WTC11 (cell line): ENCODE measurements at regions of chr11 and their contacts with region 1.

Region 1: DNA sequence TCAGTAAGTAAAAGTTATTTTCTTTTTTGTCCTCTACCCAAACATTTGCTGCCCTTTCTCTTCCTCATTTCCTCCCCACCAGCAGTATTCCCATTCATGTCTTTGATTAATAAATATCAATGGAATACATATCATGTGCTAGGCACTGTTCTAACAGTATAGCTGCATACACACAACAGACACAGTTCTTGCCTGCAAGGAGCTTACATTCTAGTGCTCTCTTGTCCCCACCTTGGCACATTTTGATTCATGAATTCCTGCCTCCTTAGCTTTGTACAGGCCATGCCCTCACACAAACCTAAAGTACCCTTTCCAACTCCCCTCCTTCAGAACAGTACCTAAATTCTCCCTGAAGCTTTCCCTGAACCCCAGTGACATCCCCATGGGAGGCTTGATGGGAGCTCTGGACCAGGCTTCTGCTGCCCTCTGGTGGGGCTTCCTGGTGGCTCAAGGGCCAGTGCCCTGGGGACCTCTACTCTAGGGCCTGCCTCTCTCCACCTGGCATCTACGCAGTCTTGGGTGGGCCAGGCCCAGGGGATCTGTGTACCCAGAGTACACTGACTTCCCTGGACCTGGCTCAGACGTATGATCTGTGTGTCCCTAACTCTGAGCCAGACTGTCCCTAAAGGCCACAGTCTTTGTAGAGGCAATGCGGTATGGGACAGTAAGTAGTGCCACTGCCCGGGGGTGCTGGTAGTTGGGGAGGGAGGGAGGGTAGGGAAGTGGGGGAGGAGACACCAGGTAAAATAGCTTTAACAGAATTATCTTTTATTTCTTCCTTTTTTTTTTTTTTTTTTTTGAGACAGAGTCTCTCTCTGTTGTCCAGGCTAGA is 14.1 kb downstream of the RPS13 start:
- DNase-seq: peak; percentile 88
- ATAC-seq: peak; percentile 99
- H3K4me3 Mint-ChIP-seq: no peak overlapping the region
- H3K27ac Mint-ChIP-seq: no peak overlapping the region
- H3K4me1 Mint-ChIP-seq: no peaks in the 10 kb centered on the region
- H3K27me3 Mint-ChIP-seq: no peaks in the 10 kb centered on the region
- CTCF ChIP-seq: peak; percentile 64

Region 2: DNA sequence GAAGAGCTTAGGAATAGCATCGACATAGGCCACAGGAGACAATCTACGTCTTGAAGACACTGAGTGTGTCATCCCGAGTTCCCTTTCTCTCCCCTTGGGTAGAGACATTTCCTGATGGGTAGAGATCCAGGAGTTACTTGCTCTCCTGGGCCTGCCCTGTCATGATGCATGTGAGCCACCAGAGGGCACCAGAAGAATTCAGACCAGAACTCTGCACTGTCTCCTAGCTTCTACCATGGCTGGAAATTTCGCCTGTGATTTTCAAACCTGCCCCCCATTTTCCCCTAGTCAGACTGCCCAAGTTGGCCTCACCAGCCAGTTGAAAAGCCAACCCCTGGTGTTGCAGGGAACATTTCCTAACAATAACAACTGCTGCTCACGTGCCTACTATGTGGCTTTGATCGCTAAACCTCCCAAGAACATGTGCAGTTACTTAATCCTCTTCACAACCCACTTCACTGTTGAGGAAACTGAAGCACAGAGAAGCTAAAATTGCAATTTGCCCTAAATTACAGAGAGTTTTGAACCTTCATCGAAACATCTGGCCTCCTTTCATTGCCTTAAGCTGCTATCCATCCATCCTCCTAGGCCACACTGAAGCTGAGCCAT is 277.8 kb before region 1 on chr11:
- CTCF ChIA-PET with region 1: interaction called, 32 read pairs
- POLR2A ChIA-PET with region 1: no interaction called
- DNase-seq: peak; percentile 79
- ATAC-seq: peak; percentile 85
- H3K4me3 Mint-ChIP-seq: no peak overlapping the region
- H3K27ac Mint-ChIP-seq: no peak overlapping the region
- H3K4me1 Mint-ChIP-seq: peaks cover 4% of the 10 kb centered on the region
- H3K27me3 Mint-ChIP-seq: no peaks in the 10 kb centered on the region
- CTCF ChIP-seq: peak; percentile 75

Region 3: DNA sequence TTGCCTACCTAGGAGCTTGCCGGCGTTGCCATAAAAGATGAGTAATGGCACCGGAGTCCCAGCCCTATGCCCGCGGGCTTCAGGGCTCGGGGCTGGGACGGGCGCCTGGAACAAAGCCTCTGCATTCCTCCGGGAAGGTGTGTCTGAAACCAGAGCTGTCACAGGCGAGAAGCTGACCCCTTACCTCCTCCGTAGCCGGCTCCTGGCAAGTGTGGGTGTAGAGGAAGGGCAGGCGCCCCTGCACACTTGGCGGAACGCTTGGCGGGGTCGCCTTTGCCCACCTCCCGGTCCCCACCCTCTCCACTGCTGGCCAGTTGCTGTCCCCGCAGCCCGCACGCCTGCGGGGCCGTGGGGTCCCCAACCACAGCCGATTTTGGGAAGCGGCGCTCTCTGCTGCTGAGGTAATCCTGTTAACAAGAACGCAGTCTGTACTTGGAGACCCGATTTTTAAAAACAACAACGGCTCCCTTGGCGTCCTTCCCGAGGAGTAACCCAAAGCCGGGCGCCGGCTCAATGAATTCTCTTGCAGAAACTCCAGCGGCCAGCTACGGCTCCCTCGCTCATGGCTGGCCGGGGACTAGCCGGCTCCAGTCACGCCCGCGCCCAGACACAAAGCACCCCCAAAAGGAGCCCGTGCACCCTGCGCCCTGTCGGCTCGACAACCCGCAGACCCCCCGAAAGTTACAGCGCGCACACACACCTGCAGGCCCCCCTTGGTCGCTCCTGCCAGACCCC is 138.4 kb before region 1 on chr11:
- CTCF ChIA-PET with region 1: interaction called, 12 read pairs
- POLR2A ChIA-PET with region 1: no interaction called
- DNase-seq: peak; percentile 68
- ATAC-seq: peak; percentile 76
- H3K4me3 Mint-ChIP-seq: peak overlapping the region; percentile 85
- H3K27ac Mint-ChIP-seq: no peak overlapping the region
- H3K4me1 Mint-ChIP-seq: peaks cover 33% of the 10 kb centered on the region
- H3K27me3 Mint-ChIP-seq: peaks cover 55% of the 10 kb centered on the region
- CTCF ChIP-seq: no peak

Region 4: DNA sequence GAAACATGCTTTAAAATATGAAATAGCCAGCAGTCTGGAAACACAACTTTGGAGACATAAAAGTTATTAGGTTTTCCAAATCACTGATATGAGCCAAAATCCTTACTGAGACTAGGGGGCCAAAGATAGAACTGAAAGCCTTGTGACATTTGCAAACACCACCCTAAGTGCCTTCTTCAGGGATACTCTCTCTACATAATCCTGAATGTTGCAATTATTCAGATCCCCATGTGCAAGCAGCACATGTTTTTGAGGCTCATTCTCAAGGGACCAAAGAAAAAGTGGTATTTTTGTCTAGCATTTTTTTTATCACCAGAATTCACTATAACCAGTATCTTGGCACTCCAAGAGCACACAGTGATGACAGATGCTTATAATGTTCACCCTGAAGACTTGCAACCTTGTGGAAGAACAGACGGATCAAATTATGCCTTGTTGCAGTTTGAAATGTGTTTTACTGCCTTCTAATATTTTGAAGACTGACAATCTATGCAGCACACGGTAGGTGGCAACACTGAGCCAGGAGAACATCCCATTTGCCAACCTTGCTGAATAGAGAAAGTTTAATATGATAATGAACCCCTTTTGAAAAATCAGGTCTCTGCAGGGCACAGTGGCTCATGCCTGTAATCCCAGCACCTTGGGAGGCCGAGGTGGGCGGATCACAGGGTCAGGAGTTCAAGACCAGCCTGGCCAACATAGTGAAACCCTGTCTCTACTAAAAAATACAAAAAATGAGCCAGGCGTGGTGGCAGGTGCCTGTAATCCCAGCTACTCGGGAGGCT is 127.7 kb before region 1 on chr11:
- CTCF ChIA-PET with region 1: interaction called, 10 read pairs
- POLR2A ChIA-PET with region 1: no interaction called
- DNase-seq: peak; percentile 45
- ATAC-seq: peak; percentile 91
- H3K4me3 Mint-ChIP-seq: no peak overlapping the region
- H3K27ac Mint-ChIP-seq: no peak overlapping the region; the same call in 1 of the 2 replicates
- H3K4me1 Mint-ChIP-seq: peaks cover 14% of the 10 kb centered on the region
- H3K27me3 Mint-ChIP-seq: no peaks in the 10 kb centered on the region; the same call in 1 of the 2 replicates
- CTCF ChIP-seq: peak; percentile 48; the same call in 1 of the 2 replicates

Region 5: GRCh38 chr11:16945671-16946469 is 117.5 kb before region 1 on chr11:
- CTCF ChIA-PET with region 1: interaction called, 36 read pairs
- POLR2A ChIA-PET with region 1: no interaction called
- DNase-seq: peak; percentile 45
- ATAC-seq: peak; percentile 76
- H3K4me3 Mint-ChIP-seq: no peak overlapping the region
- H3K27ac Mint-ChIP-seq: 0 out of 2 replicates have a peak overlapping the region, but pooled peaks have one; percentile 24
- H3K4me1 Mint-ChIP-seq: peaks cover 22% of the 10 kb centered on the region
- H3K27me3 Mint-ChIP-seq: no peaks in the 10 kb centered on the region
- CTCF ChIP-seq: no peak

Region 6: DNA sequence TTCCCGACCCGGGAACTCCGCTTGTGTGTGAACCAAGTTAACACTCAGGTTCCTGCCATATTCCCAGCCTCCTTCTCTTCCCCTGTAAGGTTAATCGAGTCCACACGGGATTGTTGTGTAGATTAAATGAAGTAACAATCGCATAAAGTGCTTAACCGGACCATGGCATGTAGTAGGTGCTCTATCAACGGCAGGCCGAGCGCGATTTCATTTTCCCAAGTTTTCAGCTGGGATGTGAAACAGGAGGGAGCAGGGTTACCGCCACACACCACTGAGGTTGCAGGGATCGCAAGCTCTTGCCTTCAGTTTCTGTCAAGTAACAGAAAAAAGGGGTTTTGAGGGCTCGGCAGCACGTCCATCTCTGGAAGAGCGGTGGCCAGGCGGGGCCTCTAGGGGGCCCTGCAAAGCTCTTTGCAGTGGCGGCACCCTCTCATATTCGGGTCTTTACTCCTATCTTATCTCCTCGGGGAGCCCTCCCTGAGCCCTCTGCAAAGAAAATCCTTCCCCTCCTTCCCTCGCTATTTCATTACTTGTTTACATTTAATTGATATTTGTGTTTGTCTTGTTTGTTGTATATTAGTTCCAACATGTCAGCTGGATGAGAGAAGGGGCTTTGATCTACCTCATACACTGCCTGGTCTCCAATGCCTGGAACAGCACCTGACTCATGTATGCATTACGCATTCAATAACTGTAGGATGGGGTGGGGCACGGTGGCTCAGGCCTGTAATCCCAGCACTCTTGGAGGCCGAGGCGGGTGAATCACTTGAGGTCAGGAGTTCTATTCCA is 48.4 kb before region 1 on chr11:
- CTCF ChIA-PET with region 1: interaction called, 18 read pairs
- POLR2A ChIA-PET with region 1: no interaction called
- DNase-seq: peak; percentile 59
- ATAC-seq: peak; percentile 58
- H3K4me3 Mint-ChIP-seq: peak overlapping the region; percentile 86
- H3K27ac Mint-ChIP-seq: peak overlapping the region; percentile 31; the same call in 1 of the 2 replicates
- H3K4me1 Mint-ChIP-seq: peaks cover 10% of the 10 kb centered on the region
- H3K27me3 Mint-ChIP-seq: peaks cover 14% of the 10 kb centered on the region; the same call in 1 of the 2 replicates
- CTCF ChIP-seq: peak; percentile 34; the same call in 1 of the 2 replicates

Region 7: DNA sequence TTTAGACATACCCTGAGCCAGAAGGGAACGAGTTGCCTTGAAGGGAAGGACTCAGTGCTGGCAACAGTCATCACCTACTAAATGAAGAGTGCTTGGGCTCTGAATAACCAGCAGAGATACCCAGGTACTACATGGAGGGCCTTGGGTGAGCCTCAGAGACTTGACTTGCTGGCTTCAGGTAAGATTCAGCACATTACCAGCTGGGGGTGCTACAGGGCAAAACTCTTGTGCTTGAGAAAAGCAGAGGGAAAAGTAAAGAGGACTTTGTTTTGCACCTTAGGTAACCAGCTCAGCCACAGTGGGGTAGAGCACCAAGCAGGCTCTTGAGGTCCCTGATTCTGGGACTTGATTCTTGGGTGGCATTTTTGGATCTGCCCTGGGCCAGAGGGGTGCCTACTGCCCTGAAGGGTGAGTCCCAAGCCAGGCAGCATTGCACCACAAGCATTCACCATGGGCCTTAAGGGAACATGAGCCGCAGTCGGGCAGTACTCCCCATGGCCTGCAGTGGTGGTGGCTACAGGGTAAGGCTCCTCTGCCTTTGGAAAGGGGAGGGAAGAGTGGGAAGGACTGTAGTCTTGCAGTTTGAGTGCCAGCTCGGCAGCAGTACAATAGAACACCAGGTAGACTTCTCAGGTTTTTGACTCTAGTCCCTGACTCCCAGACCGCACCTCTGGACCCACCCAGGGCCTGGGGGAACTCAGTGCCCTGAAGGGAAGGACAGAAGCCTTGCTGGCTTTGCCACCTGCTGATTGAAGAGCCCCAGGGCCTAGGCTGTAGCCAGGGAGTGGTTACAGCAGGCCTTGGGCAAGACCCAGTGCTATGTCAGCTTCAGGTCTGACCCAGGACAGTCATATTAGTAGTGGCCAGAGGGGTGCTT is 26.5 kb before region 1 on chr11:
- CTCF ChIA-PET with region 1: interaction called, 17 read pairs
- POLR2A ChIA-PET with region 1: no interaction called
- DNase-seq: peak; percentile 67
- ATAC-seq: peak; percentile 96
- H3K4me3 Mint-ChIP-seq: no peak overlapping the region
- H3K27ac Mint-ChIP-seq: no peak overlapping the region
- H3K4me1 Mint-ChIP-seq: no peaks in the 10 kb centered on the region; the same call in 1 of the 2 replicates
- H3K27me3 Mint-ChIP-seq: peaks cover 9% of the 10 kb centered on the region
- CTCF ChIP-seq: peak; percentile 26; the same call in 1 of the 2 replicates

Region 8: GRCh38 chr11:17230867-17231851 is 167.8 kb after region 1 on chr11:
- CTCF ChIA-PET with region 1: no interaction called
- POLR2A ChIA-PET with region 1: no interaction called
- DNase-seq: no peak
- ATAC-seq: no peak
- H3K4me3 Mint-ChIP-seq: no peak overlapping the region
- H3K27ac Mint-ChIP-seq: no peak overlapping the region
- H3K4me1 Mint-ChIP-seq: no peaks in the 10 kb centered on the region
- H3K27me3 Mint-ChIP-seq: no peaks in the 10 kb centered on the region
- CTCF ChIP-seq: no peak